Activated B cell treated with CpG ODN at 0.5 μM for 24 hours (primary cell): ENCODE measurements at regions of chr5 and their contacts with region 1.

Region 1: GRCh38 chr5:114449860-114450421 is 88.1 kb downstream of the KCNN2 start:
- DNase-seq: peak; percentile 37
- ATAC-seq: peak; percentile 94
- H3K4me3 Mint-ChIP-seq: no peak overlapping the region
- H3K27ac Mint-ChIP-seq: no peak overlapping the region
- H3K4me1 Mint-ChIP-seq: no peaks in the 10 kb centered on the region
- H3K27me3 Mint-ChIP-seq: peaks cover 3% of the 10 kb centered on the region
- CTCF ChIP-seq: no peak

Region 2: DNA sequence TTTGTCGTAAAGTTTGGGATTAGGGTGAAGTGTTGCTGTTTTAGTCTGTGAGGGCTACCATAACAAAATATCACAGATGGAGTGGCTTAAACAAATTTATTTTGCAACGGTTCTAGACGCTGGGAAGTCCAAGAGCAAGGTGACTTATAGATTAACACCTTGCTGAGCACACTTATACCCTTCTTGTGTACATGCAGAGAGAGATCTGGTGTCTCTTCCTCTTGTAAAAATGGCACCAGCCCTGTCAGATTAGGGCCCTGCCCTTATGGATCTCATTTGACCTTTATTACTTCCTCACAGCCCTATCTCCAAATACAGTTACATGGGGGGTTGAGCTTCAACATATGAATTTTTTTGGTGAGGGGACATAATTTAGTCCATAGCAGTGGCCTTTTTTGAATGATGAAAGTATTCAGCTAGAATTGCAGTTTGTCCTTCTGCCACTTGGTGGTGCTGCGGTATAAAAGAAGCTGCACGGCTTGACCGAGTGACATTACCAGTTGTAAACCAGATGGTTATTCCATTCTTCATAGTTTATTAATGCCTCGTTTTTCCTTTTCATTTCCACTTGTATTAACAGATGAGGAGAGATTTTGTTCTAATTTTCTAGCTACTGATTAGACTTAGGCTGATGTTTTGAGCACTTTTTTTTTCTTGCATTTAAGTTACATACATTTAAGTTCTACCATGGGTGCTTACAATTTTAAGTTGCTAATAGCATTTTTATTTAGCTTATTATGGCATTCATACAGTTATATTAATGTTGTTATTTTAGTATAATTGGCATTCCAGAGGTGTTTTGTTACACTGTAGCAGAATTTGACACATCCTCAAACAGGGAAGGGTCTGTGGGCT is 1454.0 kb before region 1 on chr5:
- CTCF ChIA-PET with region 1: no interaction called
- POLR2A ChIA-PET with region 1: no interaction called
- intact Hi-C with region 1: loop called (anchors 10 kb)
- DNase-seq: peak; percentile 31
- ATAC-seq: peak; percentile 74
- H3K4me3 Mint-ChIP-seq: no peak overlapping the region
- H3K27ac Mint-ChIP-seq: no peak overlapping the region
- H3K4me1 Mint-ChIP-seq: peaks cover 11% of the 10 kb centered on the region
- H3K27me3 Mint-ChIP-seq: no peaks in the 10 kb centered on the region
- CTCF ChIP-seq: peak; percentile 81

Region 3: GRCh38 chr5:113606298-113607134 is 843.4 kb before region 1 on chr5:
- CTCF ChIA-PET with region 1: interaction called, 51 read pairs
- POLR2A ChIA-PET with region 1: no interaction called
- intact Hi-C with region 1: no loop called
- DNase-seq: no peak
- ATAC-seq: peak; percentile 73
- H3K4me3 Mint-ChIP-seq: no peak overlapping the region
- H3K27ac Mint-ChIP-seq: no peak overlapping the region
- H3K4me1 Mint-ChIP-seq: no peaks in the 10 kb centered on the region
- H3K27me3 Mint-ChIP-seq: peaks cover 30% of the 10 kb centered on the region
- CTCF ChIP-seq: peak; percentile 61

Region 4: GRCh38 chr5:113678924-113679575 is 770.9 kb before region 1 on chr5:
- CTCF ChIA-PET with region 1: interaction called, 12 read pairs
- POLR2A ChIA-PET with region 1: no interaction called
- intact Hi-C with region 1: loop called (anchors 1 kb)
- DNase-seq: no peak
- ATAC-seq: no peak
- H3K4me3 Mint-ChIP-seq: no peak overlapping the region
- H3K27ac Mint-ChIP-seq: no peak overlapping the region
- H3K4me1 Mint-ChIP-seq: no peaks in the 10 kb centered on the region
- H3K27me3 Mint-ChIP-seq: no peaks in the 10 kb centered on the region
- CTCF ChIP-seq: no peak

Region 5: GRCh38 chr5:115160975-115161475 is 711.1 kb after region 1 on chr5:
- CTCF ChIA-PET with region 1: no interaction called
- POLR2A ChIA-PET with region 1: no interaction called
- intact Hi-C with region 1: no loop called
- DNase-seq: no peak
- ATAC-seq: no peak
- H3K4me3 Mint-ChIP-seq: no peak overlapping the region
- H3K27ac Mint-ChIP-seq: no peak overlapping the region
- H3K4me1 Mint-ChIP-seq: no peaks in the 10 kb centered on the region
- H3K27me3 Mint-ChIP-seq: peaks cover 7% of the 10 kb centered on the region
- CTCF ChIP-seq: no peak

Region 6: GRCh38 chr5:115246361-115246991 is 796.5 kb after region 1 on chr5:
- CTCF ChIA-PET with region 1: interaction called, 3 read pairs
- POLR2A ChIA-PET with region 1: no interaction called
- intact Hi-C with region 1: loop called (anchors 5 kb)
- DNase-seq: no peak
- ATAC-seq: peak; percentile 31
- H3K4me3 Mint-ChIP-seq: no peak overlapping the region
- H3K27ac Mint-ChIP-seq: no peak overlapping the region
- H3K4me1 Mint-ChIP-seq: peaks cover 21% of the 10 kb centered on the region
- H3K27me3 Mint-ChIP-seq: no peaks in the 10 kb centered on the region
- CTCF ChIP-seq: peak; percentile 79